Caco-2 (cell line): ENCODE measurements at regions of chr3 and their contacts with region 1.

Region 1: DNA sequence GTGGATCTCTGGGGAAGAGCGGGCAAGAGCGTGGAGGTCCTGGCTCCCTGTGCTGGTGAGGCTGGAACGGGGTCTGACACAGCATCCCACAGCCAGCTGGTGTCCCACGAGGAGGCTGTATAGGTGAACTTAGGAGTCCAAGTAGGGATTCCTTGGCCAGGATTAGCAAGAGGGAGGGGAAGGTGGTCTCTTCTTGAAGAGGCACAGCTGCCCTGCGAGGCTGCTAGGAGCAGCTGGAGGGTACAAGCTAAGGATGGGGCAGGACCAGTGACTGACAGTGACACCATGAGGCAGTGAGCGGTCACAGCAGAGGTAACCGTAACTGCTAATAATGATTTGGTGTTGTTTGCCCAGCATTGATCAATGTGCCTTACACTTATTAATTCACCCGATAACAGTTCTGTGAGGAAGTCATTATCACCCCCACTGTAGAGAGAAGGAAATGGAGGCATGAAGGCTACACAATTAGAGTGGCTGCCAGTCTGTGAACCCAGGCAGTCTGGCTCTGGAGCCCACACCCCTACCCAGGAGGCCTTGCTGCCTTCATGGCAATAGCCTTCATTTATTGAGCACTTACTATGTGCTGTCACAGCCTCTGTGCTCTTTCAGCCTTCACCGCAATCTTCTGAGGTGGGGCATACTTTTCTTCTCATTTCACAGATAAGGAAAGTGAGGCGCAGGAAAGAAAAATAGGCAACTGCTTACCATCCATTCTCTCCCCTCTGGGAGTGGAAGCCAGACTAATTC is 59.4 kb downstream of the TMEM44 start:
- DNase-seq: peak; percentile 55 to 62
- H3K4me3 ChIP-seq: no peak overlapping the region
- H3K4me3 Mint-ChIP-seq: no peak overlapping the region
- H3K27ac Mint-ChIP-seq: peak overlapping the region; percentile 98
- H3K4me1 ChIP-seq: peaks cover 54% of the 10 kb centered on the region
- H3K4me1 Mint-ChIP-seq: peaks cover 51% of the 10 kb centered on the region
- H3K27me3 ChIP-seq: no peaks in the 10 kb centered on the region
- H3K27me3 Mint-ChIP-seq: no peaks in the 10 kb centered on the region
- CTCF ChIP-seq: peak; percentile 62 to 69

Region 2: DNA sequence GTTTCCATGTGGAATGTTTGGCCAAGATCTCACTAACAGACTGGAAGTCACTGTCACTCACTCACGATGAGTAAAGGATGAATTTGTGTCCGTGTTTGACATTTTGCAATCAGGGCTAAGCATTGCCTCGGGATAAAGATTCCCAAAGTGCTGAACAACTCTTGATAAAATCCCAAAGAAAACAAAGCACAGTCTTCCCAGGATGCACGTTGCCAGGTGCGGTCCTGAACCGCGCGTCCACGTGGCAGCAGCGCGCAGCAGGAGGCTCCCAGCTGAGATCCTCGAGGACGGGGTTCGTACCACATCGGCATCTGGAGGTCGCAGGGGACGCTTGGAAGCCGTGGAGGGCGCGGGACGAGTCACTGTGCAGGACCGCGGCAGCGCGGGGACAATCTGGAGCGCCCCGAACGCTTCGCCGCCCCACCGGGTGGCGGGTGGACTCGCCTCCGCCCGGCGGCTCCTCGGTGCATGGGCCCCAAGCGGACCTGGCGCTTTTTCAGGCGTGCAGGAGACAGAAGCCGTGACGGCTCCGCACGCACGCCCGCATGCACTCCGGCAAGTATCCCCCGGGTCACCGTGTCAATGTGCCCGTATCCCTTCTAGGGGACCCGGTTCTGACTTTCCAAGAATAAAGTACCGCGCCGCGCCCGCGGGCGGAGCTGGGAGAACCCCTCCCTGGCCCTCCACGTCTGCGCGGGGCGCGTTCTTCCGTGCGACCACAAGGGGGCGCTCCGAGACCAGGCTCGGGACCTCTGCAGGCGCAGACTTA is 240.5 kb before region 1 on chr3:
- CTCF ChIA-PET with region 1: interaction called, 4 read pairs
- POLR2A ChIA-PET with region 1: no interaction called
- intact Hi-C with region 1: loop called (anchors 10 kb)
- DNase-seq: peak; percentile 90 to 95
- H3K4me3 ChIP-seq: peak overlapping the region; percentile 71
- H3K4me3 Mint-ChIP-seq: peak overlapping the region; percentile 88
- H3K27ac Mint-ChIP-seq: peak overlapping the region; percentile 92
- H3K4me1 ChIP-seq: peaks cover 26% of the 10 kb centered on the region
- H3K4me1 Mint-ChIP-seq: peaks cover 29% of the 10 kb centered on the region
- H3K27me3 ChIP-seq: no peaks in the 10 kb centered on the region
- H3K27me3 Mint-ChIP-seq: no peaks in the 10 kb centered on the region
- CTCF ChIP-seq: peak; percentile 95 to 97

Region 3: DNA sequence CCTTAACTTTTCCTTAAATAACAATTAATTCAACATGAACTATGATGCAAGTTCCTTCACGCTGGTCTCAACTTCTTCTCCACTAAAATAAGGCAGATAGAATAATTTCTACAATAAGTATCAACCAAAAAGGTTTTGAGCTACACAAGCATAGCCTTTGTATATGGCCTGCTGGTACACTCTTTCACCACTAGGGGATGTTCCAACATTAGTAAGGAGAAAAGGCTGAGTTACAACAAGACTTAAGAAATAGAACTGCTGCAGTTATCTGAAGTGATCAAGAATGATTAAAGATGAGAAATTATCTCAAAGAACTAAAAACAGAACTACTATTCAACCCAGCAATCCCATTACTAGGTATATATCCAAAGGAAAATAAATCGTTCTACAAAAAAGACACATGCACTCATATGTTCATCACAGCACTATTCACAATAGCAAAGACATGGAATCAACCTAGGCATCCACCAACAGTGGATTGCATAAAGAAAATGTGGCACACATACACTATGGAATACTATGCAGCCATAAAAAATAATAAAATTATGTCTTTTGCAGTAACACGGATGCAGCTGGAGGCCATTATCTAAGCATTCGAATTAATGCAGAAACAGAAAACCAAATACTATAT is 101.5 kb before region 1 on chr3:
- CTCF ChIA-PET with region 1: interaction called, 46 read pairs
- POLR2A ChIA-PET with region 1: interaction called, 3 read pairs
- intact Hi-C with region 1: loop called (anchors 1 kb)
- DNase-seq: peak in 1 of 2 experiments; percentile 55
- H3K4me3 ChIP-seq: no peak overlapping the region
- H3K4me3 Mint-ChIP-seq: no peak overlapping the region
- H3K27ac Mint-ChIP-seq: no peak overlapping the region
- H3K4me1 ChIP-seq: peaks cover 7% of the 10 kb centered on the region
- H3K4me1 Mint-ChIP-seq: no peaks in the 10 kb centered on the region
- H3K27me3 ChIP-seq: no peaks in the 10 kb centered on the region
- H3K27me3 Mint-ChIP-seq: no peaks in the 10 kb centered on the region
- CTCF ChIP-seq: peak; percentile 86 to 97

Region 4: DNA sequence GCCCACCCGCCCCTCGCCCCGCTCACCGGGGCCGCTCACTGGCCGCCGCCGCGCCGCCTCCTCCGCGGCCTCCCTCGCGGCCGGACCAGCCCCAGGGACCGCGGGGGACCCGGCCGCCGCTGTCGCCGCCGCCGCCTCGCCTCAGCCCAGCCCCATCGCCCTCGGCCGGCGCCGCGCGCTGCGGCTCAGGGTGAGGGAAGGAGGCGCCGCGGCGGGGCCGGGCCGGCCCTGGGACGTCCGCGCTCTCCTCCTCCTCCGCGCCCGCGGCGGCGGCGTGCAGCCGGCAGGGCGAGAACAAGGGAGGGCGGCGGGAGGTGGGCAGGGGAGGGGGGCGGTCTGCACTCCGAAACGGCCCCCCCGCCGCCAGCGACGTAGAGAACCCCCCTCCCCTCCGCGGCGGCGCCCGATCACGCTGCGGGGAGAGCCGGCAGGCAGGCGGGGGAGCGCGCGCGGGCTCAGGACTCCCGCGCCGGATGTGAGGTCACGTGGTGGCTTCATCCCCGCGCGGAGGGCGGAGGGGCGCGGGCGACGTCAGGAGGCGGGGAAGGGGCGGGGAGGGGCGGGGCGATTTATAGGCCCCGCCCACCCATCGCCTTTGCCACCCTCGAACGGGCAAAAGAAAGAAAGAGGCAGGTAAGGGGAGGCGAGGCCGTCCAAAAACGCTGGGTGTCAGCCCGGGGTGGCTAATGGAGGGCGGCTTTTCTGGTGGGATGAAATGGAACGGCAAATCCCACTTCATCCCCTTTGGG is 87.2 kb before region 1 on chr3 and contains the start of gene ATP13A3:
- CTCF ChIA-PET with region 1: interaction called, 3 read pairs
- POLR2A ChIA-PET with region 1: interaction called, 9 read pairs
- intact Hi-C with region 1: loop called (anchors 2 kb)
- DNase-seq: peak; percentile 88 to 91
- H3K4me3 ChIP-seq: peak within 1 kb of the TSS; percentile 70
- H3K4me3 Mint-ChIP-seq: peak within 1 kb of the TSS; percentile 70
- H3K27ac Mint-ChIP-seq: peak within 1 kb of the TSS; percentile 77
- H3K4me1 ChIP-seq: peaks cover 37% of the 10 kb centered on the region
- H3K4me1 Mint-ChIP-seq: peaks cover 33% of the 10 kb centered on the region
- H3K27me3 ChIP-seq: no peaks in the 10 kb centered on the region
- H3K27me3 Mint-ChIP-seq: no peaks in the 10 kb centered on the region
- CTCF ChIP-seq: no peak
- total RNA-seq, gene ATP13A3: 181 and 183 TPM in 2 replicates

Region 5: DNA sequence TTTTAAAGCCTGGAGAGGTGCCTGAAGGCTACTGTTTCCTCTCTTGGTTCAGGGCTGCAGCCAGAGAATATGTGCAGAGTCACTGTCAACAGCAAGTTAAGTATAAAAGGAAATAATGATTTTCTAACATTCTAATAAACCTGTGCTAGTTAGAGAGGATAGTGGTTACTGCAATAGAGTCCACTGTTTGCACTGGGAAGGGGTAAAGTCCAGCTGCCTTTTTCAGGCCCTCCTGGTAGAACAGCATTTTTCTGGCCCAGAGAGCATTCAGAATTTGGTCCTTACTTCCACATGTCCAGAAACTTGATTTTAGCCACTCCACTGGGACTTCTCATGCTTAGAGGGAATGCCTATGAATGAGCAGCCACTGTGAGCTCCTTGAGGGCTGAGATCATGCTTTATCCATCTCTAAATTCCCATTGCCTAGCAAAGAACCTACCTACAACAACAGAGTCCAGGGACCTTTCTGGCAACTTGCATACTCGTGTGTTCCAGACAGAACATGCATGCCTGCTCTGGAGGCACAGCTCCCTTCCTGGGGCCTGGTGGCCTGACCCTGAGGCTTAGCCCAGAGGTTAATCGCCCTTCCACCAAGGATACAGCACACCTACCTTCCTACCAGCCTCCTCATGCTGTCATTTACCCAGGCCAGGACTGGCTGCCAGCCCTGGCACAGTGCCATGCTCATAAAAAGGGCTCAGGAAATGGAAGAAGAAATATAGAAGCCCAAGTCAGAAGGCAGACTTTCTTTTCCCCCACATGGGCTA is 36.8 kb before region 1 on chr3:
- CTCF ChIA-PET with region 1: interaction called, 9 read pairs
- POLR2A ChIA-PET with region 1: interaction called, 13 read pairs
- intact Hi-C with region 1: loop called (anchors 1 kb)
- DNase-seq: peak; percentile 83 to 85
- H3K4me3 ChIP-seq: no peak overlapping the region
- H3K4me3 Mint-ChIP-seq: peak overlapping the region; percentile 50
- H3K27ac Mint-ChIP-seq: peak overlapping the region; percentile 89
- H3K4me1 ChIP-seq: peaks cover 41% of the 10 kb centered on the region
- H3K4me1 Mint-ChIP-seq: peaks cover 26% of the 10 kb centered on the region
- H3K27me3 ChIP-seq: no peaks in the 10 kb centered on the region
- H3K27me3 Mint-ChIP-seq: no peaks in the 10 kb centered on the region
- CTCF ChIP-seq: no peak

Region 6: GRCh38 chr3:194617827-194618226 is 44.0 kb after region 1 on chr3:
- CTCF ChIA-PET with region 1: no interaction called
- POLR2A ChIA-PET with region 1: no interaction called
- intact Hi-C with region 1: no loop called
- DNase-seq: no peak
- H3K4me3 ChIP-seq: no peak overlapping the region
- H3K4me3 Mint-ChIP-seq: no peak overlapping the region
- H3K27ac Mint-ChIP-seq: no peak overlapping the region
- H3K4me1 ChIP-seq: no peaks in the 10 kb centered on the region
- H3K4me1 Mint-ChIP-seq: peaks cover 3% of the 10 kb centered on the region
- H3K27me3 ChIP-seq: no peaks in the 10 kb centered on the region
- H3K27me3 Mint-ChIP-seq: no peaks in the 10 kb centered on the region
- CTCF ChIP-seq: no peak